ENCODE measurements at regions of chr13 and their contacts with region 1.

Region 1: GRCh38 chr13:40682449-40683240 is 16.2 kb upstream of the FOXO1 start:
- DNase-seq: no peak
- ATAC-seq: no peak
- H3K4me3 ChIP-seq: no peak overlapping the region
- H3K27ac ChIP-seq: no peak overlapping the region
- H3K4me1 ChIP-seq: peaks cover 0 to 18% (median 5%) of the 10 kb centered on the region in 12 donors
- H3K27me3 ChIP-seq: no peaks in the 10 kb centered on the region
- CTCF ChIP-seq: peak; percentile 59 to 85 (median 72)
- POLR2A ChIP-seq: no peak

Region 2: GRCh38 chr13:39684531-39685137 is 998.0 kb before region 1 on chr13:
- intact Hi-C with region 1: loop called (anchors 2 to 10 kb)
- DNase-seq: no peak
- ATAC-seq: no peak
- H3K4me3 ChIP-seq: no peak overlapping the region
- H3K27ac ChIP-seq: no peak overlapping the region
- H3K4me1 ChIP-seq: peaks cover 0 to 4% (median 0%) of the 10 kb centered on the region in 12 donors
- H3K27me3 ChIP-seq: no peaks in the 10 kb centered on the region
- CTCF ChIP-seq: peak; percentile 36 to 60 (median 52)
- POLR2A ChIP-seq: no peak

Region 3: GRCh38 chr13:39777527-39778061 is 905.1 kb before region 1 on chr13:
- intact Hi-C with region 1: loop called in 3 of 10 experiments (anchors 5 to 10 kb)
- DNase-seq: peak in 1 of 5 donors; percentile 31
- ATAC-seq: peak in 1 of 4 donors; percentile 46
- H3K4me3 ChIP-seq: no peak overlapping the region
- H3K27ac ChIP-seq: no peak overlapping the region
- H3K4me1 ChIP-seq: peaks cover 0 to 20% (median 0%) of the 10 kb centered on the region in 12 donors
- H3K27me3 ChIP-seq: no peaks in the 10 kb centered on the region
- CTCF ChIP-seq: peak in 6 of 12 donors; percentile 2 to 32 (median 16)
- POLR2A ChIP-seq: no peak

Region 4: GRCh38 chr13:39942552-39943273 is 739.9 kb before region 1 on chr13:
- intact Hi-C with region 1: loop called in 9 of 10 experiments (anchors 2 to 5 kb)
- DNase-seq: peak in 4 of 5 donors; percentile 44 to 68 (median 60)
- ATAC-seq: peak; percentile 61 to 97 (median 88)
- H3K4me3 ChIP-seq: no peak overlapping the region
- H3K27ac ChIP-seq: no peak overlapping the region
- H3K4me1 ChIP-seq: peaks cover 0 to 6% (median 0%) of the 10 kb centered on the region in 12 donors
- H3K27me3 ChIP-seq: no peaks in the 10 kb centered on the region
- CTCF ChIP-seq: peak; percentile 84 to 99 (median 90)
- POLR2A ChIP-seq: no peak

Region 5: GRCh38 chr13:40251343-40252032 is 431.2 kb before region 1 on chr13:
- intact Hi-C with region 1: loop called in 1 of 10 experiments (anchors 10 kb)
- DNase-seq: no peak
- ATAC-seq: peak in 3 of 4 donors; percentile 47 to 70 (median 57)
- H3K4me3 ChIP-seq: no peak overlapping the region
- H3K27ac ChIP-seq: peak overlapping the region in 4 of 12 donors; percentile 18 to 42 (median 26)
- H3K4me1 ChIP-seq: peaks cover 0 to 27% (median 3%) of the 10 kb centered on the region in 12 donors
- H3K27me3 ChIP-seq: no peaks in the 10 kb centered on the region
- CTCF ChIP-seq: no peak
- POLR2A ChIP-seq: no peak

Region 6: DNA sequence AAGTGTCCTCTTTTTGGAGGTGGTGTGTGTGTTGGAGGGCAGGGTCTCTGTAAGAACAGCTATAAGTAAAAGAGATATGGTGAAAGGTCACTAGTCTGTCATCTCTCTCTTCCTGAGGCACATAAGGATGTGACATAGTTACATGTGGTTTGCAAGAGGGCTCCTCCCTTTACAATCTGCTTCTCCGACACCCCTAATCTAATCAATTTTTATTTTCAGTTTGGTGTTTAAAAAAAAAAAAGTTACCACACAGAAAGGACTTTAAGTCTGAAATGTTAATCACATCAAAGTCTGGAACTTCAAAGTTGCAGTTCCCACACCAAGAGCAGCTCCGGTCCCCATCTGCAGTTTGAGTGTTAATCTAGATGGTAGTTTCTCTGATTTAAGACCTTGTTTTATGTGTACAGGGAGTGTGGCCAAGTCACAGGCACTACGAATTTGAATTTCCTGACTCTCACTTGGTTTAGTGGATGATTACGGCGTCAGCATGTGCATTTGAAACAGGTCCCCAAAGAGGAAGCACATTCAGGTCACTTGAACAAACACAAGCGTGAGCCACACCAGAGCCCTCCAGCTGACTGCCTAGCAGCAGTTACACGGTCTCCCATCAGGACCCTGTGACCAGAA is 69.3 kb before region 1 on chr13:
- intact Hi-C with region 1: no loop called
- DNase-seq: peak in 4 of 5 donors; percentile 37 to 50 (median 42)
- ATAC-seq: peak; percentile 58 to 88 (median 67)
- H3K4me3 ChIP-seq: peak overlapping the region in 1 of 12 donors; percentile 12
- H3K27ac ChIP-seq: peak overlapping the region in 10 of 12 donors; percentile 26 to 81 (median 64)
- H3K4me1 ChIP-seq: peaks cover 6 to 95% (median 64%) of the 10 kb centered on the region in 12 donors
- H3K27me3 ChIP-seq: no peaks in the 10 kb centered on the region
- CTCF ChIP-seq: no peak
- POLR2A ChIP-seq: no peak

Measured in heart left ventricle (tissue), 16 donors.